ENCODE measurements at regions of chr6 and their contacts with region 1.

Region 1: GRCh38 chr6:56730663-56731529 is 88.2 kb upstream of the DST start:
- DNase-seq: no peak
- ATAC-seq: 0 out of 3 replicates have a peak, but pooled peaks have one; percentile 26
- H3K4me3 ChIP-seq: no peak overlapping the region
- H3K27ac ChIP-seq: no peak overlapping the region
- H3K4me1 ChIP-seq: peaks cover 13% of the 10 kb centered on the region
- H3K27me3 ChIP-seq: no peaks in the 10 kb centered on the region
- CTCF ChIP-seq: no peak
- EP300 ChIP-seq: no peak
- POLR2A ChIP-seq: no peak
- RAD21 ChIP-seq: no peak

Region 2: GRCh38 chr6:56714982-56715456 is 15.9 kb before region 1 on chr6:
- CTCF ChIA-PET with region 1: interaction called, 105 read pairs
- POLR2A ChIA-PET with region 1: interaction called, 4 read pairs
- RAD21 ChIA-PET with region 1: interaction called, 12 read pairs
- SMC1A ChIA-PET with region 1: interaction called, 17 read pairs
- in situ Hi-C with region 1: no loop called
- intact Hi-C with region 1: no loop called
- DNase-seq: no peak
- ATAC-seq: no peak
- H3K4me3 ChIP-seq: no peak overlapping the region
- H3K27ac ChIP-seq: no peak overlapping the region
- H3K4me1 ChIP-seq: peaks cover 18% of the 10 kb centered on the region
- H3K27me3 ChIP-seq: no peaks in the 10 kb centered on the region
- CTCF ChIP-seq: no peak
- EP300 ChIP-seq: no peak
- POLR2A ChIP-seq: no peak
- RAD21 ChIP-seq: no peak

Region 3: DNA sequence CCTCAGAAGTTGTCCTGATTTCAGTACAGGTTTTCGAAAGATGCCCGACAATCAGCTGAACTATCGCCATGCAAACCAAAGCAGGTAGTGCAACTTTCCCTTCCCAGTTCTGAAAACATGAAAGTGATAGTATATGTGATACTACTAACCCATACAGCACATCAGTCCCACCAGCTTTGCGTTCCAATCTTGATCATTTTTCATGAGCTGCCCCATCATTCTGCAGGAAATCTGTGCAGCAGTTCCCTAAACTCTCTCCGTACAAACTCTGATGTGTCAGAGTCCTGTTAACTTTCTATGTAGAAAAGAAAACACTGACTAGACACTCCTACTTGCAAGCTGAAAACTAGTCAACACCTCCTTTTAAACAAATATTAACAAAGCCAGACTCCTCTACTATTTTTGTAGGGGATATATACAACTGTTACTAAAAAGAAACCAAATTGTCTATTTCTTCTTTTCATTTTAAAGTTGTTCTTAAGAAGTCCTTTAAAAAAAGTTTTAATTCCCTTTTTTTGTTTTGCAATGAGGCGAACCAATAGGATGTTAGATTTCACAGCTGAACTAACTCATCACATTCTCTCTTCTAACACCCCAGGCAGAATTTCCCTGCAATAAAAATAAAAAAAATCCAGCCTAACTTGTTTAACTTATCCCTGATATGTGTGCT is 11.4 kb after region 1 on chr6:
- CTCF ChIA-PET with region 1: interaction called, 8 read pairs
- POLR2A ChIA-PET with region 1: interaction called, 5 read pairs
- RAD21 ChIA-PET with region 1: interaction called, 5 read pairs
- SMC1A ChIA-PET with region 1: interaction called, 10 read pairs
- in situ Hi-C with region 1: no loop called
- intact Hi-C with region 1: no loop called
- DNase-seq: no peak
- ATAC-seq: peak; percentile 83
- H3K4me3 ChIP-seq: peak overlapping the region; percentile 17; the same call in 1 of the 2 replicates
- H3K27ac ChIP-seq: peak overlapping the region; percentile 50
- H3K4me1 ChIP-seq: peaks cover 20% of the 10 kb centered on the region
- H3K27me3 ChIP-seq: no peaks in the 10 kb centered on the region
- CTCF ChIP-seq: no peak
- EP300 ChIP-seq: no peak
- POLR2A ChIP-seq: no peak
- RAD21 ChIP-seq: no peak

Region 4: DNA sequence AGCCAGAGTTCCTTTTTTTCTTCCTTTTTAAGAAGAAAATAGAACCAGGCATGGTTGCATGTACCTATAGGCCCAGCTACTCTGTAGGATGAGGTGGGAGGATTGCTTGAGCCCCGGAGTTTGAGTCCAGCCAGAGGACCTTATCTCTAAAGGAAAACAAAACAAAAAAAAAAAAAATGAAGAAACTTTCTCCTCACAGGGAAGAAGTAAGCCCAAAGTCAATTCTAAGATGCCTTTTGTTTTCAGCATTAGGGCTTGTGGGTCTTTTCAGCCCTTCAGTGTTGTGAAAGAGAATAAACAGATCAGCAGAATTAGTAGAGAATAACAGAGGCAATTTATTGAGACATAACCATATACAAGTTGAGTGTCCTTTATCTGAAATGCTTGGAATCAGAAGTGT is 385.9 kb after region 1 on chr6:
- CTCF ChIA-PET with region 1: no interaction called
- POLR2A ChIA-PET with region 1: no interaction called
- RAD21 ChIA-PET with region 1: no interaction called
- SMC1A ChIA-PET with region 1: no interaction called
- in situ Hi-C with region 1: no loop called
- intact Hi-C with region 1: no loop called
- DNase-seq: no peak
- ATAC-seq: no peak
- H3K4me3 ChIP-seq: no peak overlapping the region
- H3K27ac ChIP-seq: no peak overlapping the region
- H3K4me1 ChIP-seq: no peaks in the 10 kb centered on the region
- H3K27me3 ChIP-seq: no peaks in the 10 kb centered on the region
- CTCF ChIP-seq: no peak
- EP300 ChIP-seq: no peak
- POLR2A ChIP-seq: no peak
- RAD21 ChIP-seq: no peak

Measured in GM12878 (cell line).